Right ventricle myocardium inferior (tissue), 1 donor: ENCODE measurements at regions of chr11 and their contacts with region 1.

Region 1: DNA sequence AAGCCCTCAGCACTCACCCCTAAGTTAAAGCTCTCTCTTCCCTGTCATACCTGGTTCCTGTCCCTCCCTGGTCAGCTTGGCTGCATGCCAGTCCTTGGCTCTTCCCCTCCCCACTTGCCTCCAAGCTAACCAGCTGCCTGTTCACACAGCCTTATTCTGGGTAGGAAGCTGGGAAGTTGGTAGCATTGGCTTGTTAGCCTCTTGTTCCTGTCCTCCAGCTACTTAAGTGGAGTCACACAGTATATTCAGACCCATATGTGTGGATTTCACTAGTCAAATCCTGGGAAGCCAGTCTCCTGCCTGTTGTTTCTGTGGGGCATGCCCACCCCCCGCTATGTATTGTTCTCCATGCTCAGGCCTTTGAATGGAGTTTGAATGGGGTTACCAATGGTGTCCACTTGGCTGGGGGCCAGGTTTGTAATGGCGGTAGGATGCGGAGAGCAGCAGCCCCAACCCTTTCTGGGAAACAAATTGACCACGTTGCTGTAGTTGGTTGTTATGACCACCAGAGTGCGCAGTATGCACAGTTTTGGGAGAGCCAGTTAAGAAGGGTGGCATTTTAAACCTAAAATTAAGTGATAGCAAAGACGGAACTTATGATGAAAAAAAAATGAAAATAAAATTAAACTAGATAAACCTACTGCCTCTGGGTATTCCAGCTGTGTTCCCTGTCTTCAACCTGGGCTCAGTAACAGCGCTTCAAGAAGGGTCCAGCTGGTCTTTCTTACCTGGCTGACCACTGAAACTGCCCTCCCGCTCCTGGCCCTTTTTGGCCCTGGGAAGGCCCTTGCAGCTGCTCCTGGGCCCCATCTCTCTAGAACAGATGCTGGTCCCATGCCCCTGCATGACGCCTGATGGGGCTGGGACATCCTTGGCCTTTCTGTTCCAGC is 10.7 kb upstream of the RPS3 start:
- DNase-seq: peak; percentile 75
- ATAC-seq: peak; percentile 70

Region 2: DNA sequence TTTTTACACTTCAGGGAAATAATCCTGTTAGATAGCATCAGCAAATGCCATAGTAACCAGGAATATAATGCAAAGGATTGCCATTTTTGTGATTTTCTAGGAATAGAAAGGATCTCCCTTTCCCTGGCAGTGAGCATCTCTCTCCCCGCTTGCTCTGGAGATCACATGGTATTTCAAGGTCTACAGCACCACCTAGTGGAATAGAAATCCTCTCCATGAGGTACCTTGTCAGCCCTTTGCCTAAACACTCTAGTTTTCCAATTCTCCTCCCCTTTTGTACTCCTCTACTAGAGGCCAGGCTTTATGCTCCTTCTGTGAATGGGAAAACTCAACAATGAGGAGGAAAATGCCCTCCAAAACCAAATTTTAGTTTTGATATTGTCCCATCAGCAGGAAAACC is 518.1 kb before region 1 on chr11:
- intact Hi-C with region 1: no loop called
- DNase-seq: no peak
- ATAC-seq: no peak

Region 3: DNA sequence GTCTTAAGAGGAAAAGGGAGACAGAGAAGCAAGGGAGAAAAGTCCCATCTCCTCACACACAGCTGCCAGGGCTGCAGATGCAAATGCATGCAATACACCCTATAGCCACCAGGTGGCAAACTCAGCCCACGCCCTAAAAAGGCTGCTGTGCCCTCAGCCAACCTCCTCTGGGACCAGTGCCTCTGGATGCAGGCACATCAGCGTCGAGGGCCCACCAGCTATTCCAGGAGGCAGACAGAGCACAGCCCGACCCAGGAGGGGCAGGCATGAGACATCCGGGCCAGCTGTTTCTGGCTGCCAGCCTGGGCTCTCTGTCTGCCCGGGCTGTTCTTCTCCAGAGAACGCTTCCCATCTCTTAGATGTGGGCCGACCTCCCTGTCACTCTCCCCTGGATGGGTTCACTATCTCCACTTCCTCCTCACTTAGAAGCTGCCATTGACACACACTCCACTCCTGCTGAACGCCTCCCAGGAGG is 108.4 kb before region 1 on chr11:
- intact Hi-C with region 1: loop called (anchors 1 kb)
- DNase-seq: peak; percentile 85
- ATAC-seq: peak; percentile 76

Region 4: DNA sequence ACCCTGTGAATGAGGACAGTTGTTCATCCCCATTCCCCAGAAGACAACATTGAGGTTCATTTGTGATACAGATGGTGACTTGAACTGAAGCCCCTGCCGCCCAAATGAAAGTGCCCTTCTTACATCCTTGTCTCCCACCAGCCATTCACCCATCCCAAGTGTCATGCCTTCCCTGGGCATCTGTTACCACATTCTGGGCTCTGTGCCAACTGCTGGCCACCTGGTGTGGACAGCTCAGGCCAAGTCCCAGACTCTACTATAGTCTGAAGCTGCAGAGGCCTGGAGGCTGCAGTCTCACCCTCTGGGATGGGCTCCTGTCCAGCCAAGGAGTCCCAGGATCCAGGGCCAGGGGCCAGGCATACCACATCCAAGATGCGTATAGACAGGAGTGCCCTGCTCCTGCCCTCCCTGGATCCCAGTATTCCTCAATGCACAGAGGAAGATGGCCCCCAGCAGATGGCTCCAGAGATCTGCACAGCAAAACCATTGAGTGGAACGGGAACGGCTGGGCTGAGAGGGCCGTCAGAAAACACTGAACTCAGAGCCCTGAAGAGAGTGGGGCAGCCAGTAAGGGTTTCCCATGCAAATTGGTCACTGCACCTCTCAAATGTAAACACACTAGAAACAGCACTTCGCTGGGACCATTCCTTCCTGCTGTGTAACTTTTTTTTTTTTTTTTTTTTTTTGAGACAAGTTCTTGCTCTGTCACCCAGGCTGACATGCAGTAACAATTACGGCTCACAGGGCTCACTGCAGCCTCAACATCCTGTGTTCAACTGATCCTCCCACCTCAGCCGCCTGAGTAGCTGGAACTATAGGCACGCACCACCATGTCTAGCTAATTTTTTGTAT is 60.0 kb before region 1 on chr11:
- intact Hi-C with region 1: loop called (anchors 1 kb)
- DNase-seq: peak; percentile 78
- ATAC-seq: peak; percentile 81

Region 5: GRCh38 chr11:75520688-75521087 is 132.1 kb after region 1 on chr11:
- intact Hi-C with region 1: no loop called
- DNase-seq: no peak
- ATAC-seq: no peak

Region 6: GRCh38 chr11:75532200-75533048 is 143.8 kb after region 1 on chr11:
- intact Hi-C with region 1: loop called (anchors 2 kb)
- DNase-seq: peak; percentile 72
- ATAC-seq: peak; percentile 45